WTC11 (cell line): ENCODE measurements at regions of chr7 and their contacts with region 1.

Region 1: GRCh38 chr7:130982160-130982638 is 248.2 kb upstream of the KLF14 start:
- DNase-seq: no peak
- ATAC-seq: peak; percentile 93
- H3K4me3 Mint-ChIP-seq: no peak overlapping the region
- H3K27ac Mint-ChIP-seq: no peak overlapping the region
- H3K4me1 Mint-ChIP-seq: peaks cover 4% of the 10 kb centered on the region; the same call in 1 of the 2 replicates
- H3K27me3 Mint-ChIP-seq: no peaks in the 10 kb centered on the region
- CTCF ChIP-seq: no peak

Region 2: GRCh38 chr7:130970696-130971095 is 11.5 kb before region 1 on chr7:
- CTCF ChIA-PET with region 1: interaction called, 10 read pairs
- POLR2A ChIA-PET with region 1: no interaction called
- DNase-seq: no peak
- ATAC-seq: no peak
- H3K4me3 Mint-ChIP-seq: no peak overlapping the region
- H3K27ac Mint-ChIP-seq: no peak overlapping the region
- H3K4me1 Mint-ChIP-seq: no peaks in the 10 kb centered on the region
- H3K27me3 Mint-ChIP-seq: no peaks in the 10 kb centered on the region
- CTCF ChIP-seq: no peak